GM10248 (cell line): ENCODE measurements at regions of chr13 and their contacts with region 1.

Region 1: GRCh38 chr13:75694722-75695121 is 58.6 kb downstream of the LMO7 start:
- DNase-seq: no peak
- CTCF ChIP-seq: no peak

Region 2: DNA sequence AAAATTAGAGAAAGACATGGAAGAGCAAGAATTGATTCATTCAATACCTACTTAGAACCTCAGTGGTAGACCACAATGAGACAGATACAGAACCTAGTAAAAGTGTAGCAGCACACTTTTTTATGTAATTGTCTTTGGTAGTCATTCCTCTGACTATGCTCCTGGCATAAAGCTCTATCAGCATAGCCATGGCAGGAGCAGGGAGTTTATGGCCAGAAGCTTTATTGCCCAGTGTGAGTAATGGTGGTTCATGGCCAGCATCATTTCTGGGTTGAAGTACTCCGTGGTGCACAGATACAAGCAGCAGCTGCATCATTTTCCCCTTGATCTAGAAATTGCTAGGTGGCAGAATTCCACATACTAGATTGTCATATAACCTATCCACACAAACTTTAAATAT is 565.4 kb before region 1 on chr13:
- CTCF ChIA-PET with region 1: no interaction called
- POLR2A ChIA-PET with region 1: no interaction called
- DNase-seq: no peak
- CTCF ChIP-seq: no peak

Region 3: DNA sequence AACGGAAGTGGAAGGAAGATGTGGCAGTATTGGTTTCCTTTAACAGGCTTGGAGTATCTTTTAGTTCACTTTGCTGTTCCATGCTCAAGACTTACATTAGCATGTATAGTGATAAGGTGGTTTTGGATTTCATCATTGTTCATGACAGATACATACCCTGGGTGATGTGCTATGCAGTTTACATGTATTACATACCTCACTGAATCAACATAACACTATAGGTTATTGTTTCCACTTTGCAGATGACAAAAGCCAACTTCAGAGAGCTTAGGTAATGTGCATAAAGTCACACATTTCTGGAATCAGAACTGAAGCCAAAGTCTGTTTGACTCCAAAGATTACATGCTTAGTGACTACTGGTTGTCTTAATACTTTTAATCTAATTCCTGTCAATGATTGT is 164.2 kb before region 1 on chr13:
- CTCF ChIA-PET with region 1: no interaction called
- POLR2A ChIA-PET with region 1: no interaction called
- DNase-seq: no peak
- CTCF ChIP-seq: no peak

Region 4: DNA sequence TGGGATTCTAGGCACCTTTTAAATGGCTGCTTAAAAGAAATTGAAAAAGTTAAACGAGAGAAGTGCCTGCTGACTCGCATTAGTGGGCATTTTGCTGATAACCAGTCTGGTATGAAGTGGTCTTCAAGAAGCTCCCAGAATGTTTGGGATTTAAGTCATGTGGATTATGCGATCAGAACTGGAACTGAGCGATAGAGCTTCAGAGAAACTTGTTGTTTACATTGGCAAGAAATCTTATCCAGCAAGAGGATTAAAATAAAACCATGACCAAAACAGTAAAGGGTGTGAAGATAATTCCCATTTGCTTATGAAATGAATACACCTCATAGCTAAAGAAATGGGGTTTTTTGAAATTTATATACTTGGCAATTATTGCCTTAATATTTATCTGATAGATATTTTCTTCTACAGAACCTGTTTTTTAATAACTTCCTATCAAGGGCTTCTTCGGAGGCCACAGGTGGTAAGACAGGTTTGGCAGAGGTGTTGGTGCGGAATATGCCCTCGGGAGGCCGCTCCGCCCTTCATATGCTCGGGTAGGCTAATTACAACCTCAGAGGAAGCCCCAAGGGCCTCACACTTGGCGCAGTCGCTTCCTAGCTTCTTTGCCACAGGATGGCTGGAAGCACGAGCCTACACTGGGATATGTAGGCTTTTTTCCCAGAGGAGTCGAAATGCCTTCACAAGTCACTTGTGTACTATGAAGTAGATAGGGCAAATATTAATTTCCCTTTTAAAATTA is 10.0 kb after region 1 on chr13:
- CTCF ChIA-PET with region 1: interaction called, 64 read pairs
- POLR2A ChIA-PET with region 1: no interaction called
- DNase-seq: no peak
- CTCF ChIP-seq: no peak

Region 5: DNA sequence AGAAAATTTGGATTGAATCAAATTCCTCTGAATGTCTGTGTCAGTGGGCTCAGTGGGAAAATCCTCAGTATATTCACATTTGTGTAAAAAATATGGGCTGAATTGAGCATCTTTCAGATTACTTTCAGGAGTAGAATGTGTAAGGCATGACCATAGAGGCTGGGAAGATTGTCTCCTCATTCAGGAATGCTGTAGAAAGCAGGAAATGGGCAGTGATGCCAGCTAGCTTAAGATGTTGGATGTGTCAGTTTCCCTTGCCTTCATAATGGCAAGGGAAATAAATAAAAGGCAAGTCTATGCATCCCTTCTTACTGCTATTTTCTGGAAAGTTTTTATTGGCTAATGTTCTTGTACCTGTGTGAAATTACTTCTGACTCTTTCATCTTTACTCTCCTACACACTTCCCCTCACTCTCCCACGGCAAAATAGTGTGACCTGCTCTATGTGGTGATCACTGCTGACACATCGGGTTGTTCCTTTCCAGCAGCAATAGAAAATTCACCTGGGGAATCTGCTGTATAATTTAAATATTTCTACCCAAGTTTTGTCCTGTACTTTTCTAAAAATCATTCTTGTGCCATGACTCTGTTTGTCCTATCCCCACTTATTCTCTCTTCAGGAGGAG is 44.6 kb after region 1 on chr13:
- CTCF ChIA-PET with region 1: interaction called, 27 read pairs
- POLR2A ChIA-PET with region 1: no interaction called
- DNase-seq: no peak
- CTCF ChIP-seq: no peak

Region 6: DNA sequence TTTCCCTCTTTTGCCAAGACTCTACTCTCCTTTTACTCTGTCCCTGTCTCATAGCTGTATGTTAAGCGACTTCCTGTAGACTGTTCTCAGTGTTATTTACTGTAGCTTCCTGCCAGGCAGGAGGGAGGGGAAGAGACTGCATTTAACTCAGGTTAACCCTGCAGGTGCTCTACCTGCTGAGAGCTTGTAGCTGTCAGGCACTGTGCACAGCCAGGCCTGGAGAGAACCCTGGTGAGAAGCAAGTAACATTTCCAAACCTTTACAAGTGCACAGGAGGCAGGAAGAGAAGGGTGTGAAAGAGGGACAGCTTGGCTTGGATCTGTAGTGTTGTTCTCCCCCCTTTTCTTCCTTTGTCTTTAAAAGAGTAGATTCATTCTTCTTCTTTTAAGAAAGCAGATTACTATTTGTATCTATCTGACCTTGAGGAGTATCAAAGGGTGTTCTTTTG is 108.5 kb after region 1 on chr13:
- CTCF ChIA-PET with region 1: interaction called, 22 read pairs
- POLR2A ChIA-PET with region 1: no interaction called
- DNase-seq: peak; percentile 13
- CTCF ChIP-seq: no peak

Region 7: DNA sequence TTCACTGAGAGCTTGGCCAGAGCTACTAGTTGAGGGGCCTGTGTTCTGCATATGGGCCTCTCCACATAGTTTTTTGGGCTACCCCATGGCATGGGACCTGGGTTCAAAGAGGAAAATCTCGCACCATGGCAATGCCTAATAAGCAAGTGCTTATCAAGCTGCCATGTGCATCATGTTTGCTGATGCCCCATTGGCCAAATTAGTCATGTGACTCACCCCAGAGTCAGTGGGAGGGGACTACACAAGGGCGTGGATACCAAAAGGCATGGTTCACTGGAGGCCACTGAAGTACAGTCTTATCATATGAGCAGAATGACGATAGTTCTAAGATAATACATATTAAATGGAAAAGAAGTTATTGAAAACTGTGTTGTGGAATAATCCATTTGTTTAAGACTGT is 156.2 kb after region 1 on chr13:
- CTCF ChIA-PET with region 1: interaction called, 11 read pairs
- POLR2A ChIA-PET with region 1: no interaction called
- DNase-seq: no peak
- CTCF ChIP-seq: no peak

Region 8: GRCh38 chr13:75876360-75877050 is 181.8 kb after region 1 on chr13:
- CTCF ChIA-PET with region 1: interaction called, 50 read pairs
- POLR2A ChIA-PET with region 1: no interaction called
- DNase-seq: peak; percentile 42
- CTCF ChIP-seq: peak; percentile 88

Region 9: GRCh38 chr13:76226941-76227340 is 532.2 kb after region 1 on chr13:
- CTCF ChIA-PET with region 1: no interaction called
- POLR2A ChIA-PET with region 1: no interaction called
- DNase-seq: no peak
- CTCF ChIP-seq: no peak

Region 10: DNA sequence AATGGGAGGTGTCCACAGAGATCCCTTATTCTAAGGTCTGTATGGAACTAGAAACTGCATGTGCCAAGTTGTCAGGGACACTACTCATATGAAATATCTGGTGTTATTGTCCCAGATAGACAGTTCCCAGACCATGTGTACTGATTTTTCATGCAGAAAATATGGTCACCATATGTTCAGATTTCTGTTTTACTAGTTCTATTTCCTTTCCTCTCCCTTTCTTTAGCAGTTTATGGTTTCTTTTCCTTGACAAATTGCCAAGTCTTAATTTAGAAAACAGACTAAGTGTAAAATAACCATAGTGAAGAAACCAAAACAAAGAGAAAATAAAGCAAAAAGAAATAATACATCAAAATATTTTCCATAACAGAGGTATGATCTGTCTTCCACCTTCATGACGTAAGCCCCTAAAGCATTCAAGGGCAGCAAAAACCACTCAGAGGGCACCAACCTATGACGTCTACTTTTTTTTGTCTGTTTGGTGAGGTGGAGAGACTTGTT is 943.0 kb after region 1 on chr13:
- CTCF ChIA-PET with region 1: no interaction called
- POLR2A ChIA-PET with region 1: no interaction called
- DNase-seq: no peak
- CTCF ChIP-seq: no peak